ENCODE measurements at regions of chr17 and their contacts with region 1.

Region 1: GRCh38 chr17:50478391-50479381 is at the start of gene RSAD1:
- DNase-seq: peak; percentile 79
- H3K4me3 Mint-ChIP-seq: peak within 1 kb of the TSS; percentile 91
- H3K27ac Mint-ChIP-seq: peak within 1 kb of the TSS; percentile 81
- H3K4me1 Mint-ChIP-seq: peaks cover 27% of the 10 kb centered on the region
- H3K27me3 Mint-ChIP-seq: peaks cover 6% of the 10 kb centered on the region
- total RNA-seq, gene RSAD1: 53.4 and 54.2 TPM in 2 replicates

Region 2: DNA sequence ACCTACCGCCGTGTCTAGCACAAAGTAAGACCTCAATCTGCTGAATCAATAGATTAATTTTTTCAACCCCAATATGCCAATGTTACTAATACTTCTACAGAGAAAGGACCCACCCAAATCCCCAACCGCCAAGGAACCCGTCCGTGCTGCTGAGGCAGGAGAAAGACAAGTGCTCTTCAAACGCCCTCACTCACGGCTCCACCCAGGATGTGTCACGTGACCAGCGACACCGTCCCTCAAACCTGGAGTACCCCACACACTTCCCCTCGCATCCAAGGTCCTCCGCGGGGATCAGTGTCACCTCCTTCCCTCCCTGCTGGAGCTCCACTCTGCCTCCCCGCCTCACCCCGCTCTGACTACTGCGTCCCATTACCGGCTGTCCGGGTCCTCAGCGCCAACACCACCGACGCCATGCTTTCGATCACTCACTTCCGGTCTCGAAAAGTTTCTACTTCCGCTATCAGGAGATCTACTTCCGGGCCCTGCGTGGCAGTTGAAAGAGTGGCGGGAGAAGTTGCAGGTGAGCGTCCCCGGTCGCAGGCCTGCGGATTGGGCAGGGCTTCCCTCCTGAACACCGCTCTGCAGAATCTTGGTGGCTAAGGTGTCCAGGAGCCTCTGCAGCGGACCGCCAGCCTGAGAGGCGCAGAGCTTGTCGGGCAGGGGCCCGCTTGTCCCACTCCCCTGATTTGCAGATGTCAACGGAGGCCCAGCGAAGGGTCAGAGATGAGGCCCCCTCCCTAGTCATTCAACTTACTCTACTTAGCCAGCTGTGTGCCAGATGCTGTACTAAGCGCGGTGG is 105.7 kb before region 1 on chr17 and contains the starts of genes EME1 and MRPL27:
- intact Hi-C with region 1: loop called (anchors 1 kb)
- DNase-seq: peak; percentile 83
- H3K4me3 Mint-ChIP-seq: peak within 1 kb of the TSS; percentile 98
- H3K27ac Mint-ChIP-seq: peak within 1 kb of the TSS; percentile 100
- H3K4me1 Mint-ChIP-seq: peaks cover 33% of the 10 kb centered on the region
- H3K27me3 Mint-ChIP-seq: no peaks in the 10 kb centered on the region
- total RNA-seq, gene EME1: 27.7 and 32.9 TPM in 2 replicates
- total RNA-seq, gene MRPL27: 73.4 and 78.7 TPM in 2 replicates

Region 3: DNA sequence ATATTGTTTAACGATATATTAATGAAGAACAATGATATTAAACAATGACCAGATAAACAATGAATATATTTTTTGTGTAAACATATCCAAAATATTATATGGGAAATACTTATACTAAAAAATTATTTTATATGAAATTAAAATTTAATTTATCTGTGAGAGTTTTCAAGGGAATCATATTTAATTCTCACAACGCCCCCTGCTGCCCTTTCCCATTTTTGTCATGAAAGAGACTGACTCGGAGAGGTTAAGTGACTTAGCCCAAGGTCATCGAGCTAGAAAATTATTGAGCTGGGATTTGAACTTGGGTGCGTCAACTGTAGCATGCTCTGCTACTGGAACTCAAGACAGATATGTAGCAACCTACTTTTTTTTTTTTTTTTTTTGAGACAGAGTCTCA is 22.4 kb after region 1 on chr17:
- intact Hi-C with region 1: loop called (anchors 1 kb)
- DNase-seq: no peak
- H3K4me3 Mint-ChIP-seq: no peak overlapping the region
- H3K27ac Mint-ChIP-seq: no peak overlapping the region
- H3K4me1 Mint-ChIP-seq: peaks cover 20% of the 10 kb centered on the region
- H3K27me3 Mint-ChIP-seq: peaks cover 3% of the 10 kb centered on the region

Region 4: DNA sequence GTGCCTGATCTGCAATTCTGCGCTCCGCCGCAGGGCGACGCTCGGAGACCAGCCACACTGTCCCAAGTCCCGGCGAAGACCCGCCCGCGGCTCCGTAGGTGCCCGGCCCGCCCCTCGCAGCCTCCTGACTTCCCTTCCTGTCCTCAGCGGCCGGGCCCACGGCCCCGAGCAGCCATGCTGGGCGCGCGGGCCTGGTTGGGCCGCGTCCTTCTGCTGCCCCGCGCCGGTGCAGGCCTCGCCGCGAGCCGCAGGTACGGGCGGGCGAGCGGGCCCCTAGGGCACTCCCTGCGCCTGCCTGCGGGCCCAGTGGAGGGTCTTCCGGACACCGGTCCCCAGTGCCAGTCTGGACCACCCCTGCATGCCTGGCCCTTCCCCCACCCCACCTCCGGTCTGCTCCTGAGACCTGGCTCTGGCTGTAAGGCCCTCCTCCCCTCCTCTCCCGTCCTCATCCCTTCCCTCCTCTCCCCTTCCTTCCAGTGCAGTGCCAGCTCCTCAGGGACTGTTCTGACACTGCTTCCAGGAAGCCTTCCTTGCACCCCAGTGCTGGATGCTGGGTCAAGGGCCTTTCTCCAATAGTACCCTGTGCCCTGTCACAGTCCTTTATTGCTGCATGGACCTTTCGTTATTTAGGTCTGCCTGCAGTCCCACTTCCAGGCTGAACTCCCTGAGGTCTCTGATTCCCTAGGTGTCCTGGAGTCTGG is 68.5 kb after region 1 on chr17 and contains the start of gene SPATA20:
- intact Hi-C with region 1: loop called (anchors 1 kb)
- DNase-seq: peak; percentile 81
- H3K4me3 Mint-ChIP-seq: peak within 1 kb of the TSS; percentile 77
- H3K27ac Mint-ChIP-seq: peak within 1 kb of the TSS; percentile 79
- H3K4me1 Mint-ChIP-seq: peaks cover 16% of the 10 kb centered on the region
- H3K27me3 Mint-ChIP-seq: peaks cover 12% of the 10 kb centered on the region
- total RNA-seq, gene SPATA20: 20.5 and 22.5 TPM in 2 replicates

Region 5: GRCh38 chr17:50697663-50698274 is 219.1 kb after region 1 on chr17:
- intact Hi-C with region 1: loop called (anchors 5 kb)
- DNase-seq: no peak
- H3K4me3 Mint-ChIP-seq: no peak overlapping the region
- H3K27ac Mint-ChIP-seq: no peak overlapping the region
- H3K4me1 Mint-ChIP-seq: peaks cover 37% of the 10 kb centered on the region
- H3K27me3 Mint-ChIP-seq: no peaks in the 10 kb centered on the region